ENCODE measurements at regions of chr20 and their contacts with region 1.

Region 1: GRCh38 chr20:4720041-4720976 is 1.4 kb upstream of the PRND start:
- DNase-seq: peak; percentile 87
- ATAC-seq: peak; percentile 81
- H3K4me3 Mint-ChIP-seq: no peak overlapping the region
- H3K27ac Mint-ChIP-seq: peak overlapping the region; percentile 55
- H3K4me1 Mint-ChIP-seq: peaks cover 13% of the 10 kb centered on the region
- H3K27me3 Mint-ChIP-seq: peaks cover 9% of the 10 kb centered on the region

Region 2: GRCh38 chr20:4607287-4607713 is 113.0 kb before region 1 on chr20:
- CTCF ChIA-PET with region 1: interaction called, 24 read pairs
- POLR2A ChIA-PET with region 1: interaction called, 3 read pairs
- DNase-seq: peak; percentile 70
- ATAC-seq: peak; percentile 80
- H3K4me3 Mint-ChIP-seq: no peak overlapping the region
- H3K27ac Mint-ChIP-seq: no peak overlapping the region
- H3K4me1 Mint-ChIP-seq: no peaks in the 10 kb centered on the region
- H3K27me3 Mint-ChIP-seq: peaks cover 20% of the 10 kb centered on the region

Region 3: DNA sequence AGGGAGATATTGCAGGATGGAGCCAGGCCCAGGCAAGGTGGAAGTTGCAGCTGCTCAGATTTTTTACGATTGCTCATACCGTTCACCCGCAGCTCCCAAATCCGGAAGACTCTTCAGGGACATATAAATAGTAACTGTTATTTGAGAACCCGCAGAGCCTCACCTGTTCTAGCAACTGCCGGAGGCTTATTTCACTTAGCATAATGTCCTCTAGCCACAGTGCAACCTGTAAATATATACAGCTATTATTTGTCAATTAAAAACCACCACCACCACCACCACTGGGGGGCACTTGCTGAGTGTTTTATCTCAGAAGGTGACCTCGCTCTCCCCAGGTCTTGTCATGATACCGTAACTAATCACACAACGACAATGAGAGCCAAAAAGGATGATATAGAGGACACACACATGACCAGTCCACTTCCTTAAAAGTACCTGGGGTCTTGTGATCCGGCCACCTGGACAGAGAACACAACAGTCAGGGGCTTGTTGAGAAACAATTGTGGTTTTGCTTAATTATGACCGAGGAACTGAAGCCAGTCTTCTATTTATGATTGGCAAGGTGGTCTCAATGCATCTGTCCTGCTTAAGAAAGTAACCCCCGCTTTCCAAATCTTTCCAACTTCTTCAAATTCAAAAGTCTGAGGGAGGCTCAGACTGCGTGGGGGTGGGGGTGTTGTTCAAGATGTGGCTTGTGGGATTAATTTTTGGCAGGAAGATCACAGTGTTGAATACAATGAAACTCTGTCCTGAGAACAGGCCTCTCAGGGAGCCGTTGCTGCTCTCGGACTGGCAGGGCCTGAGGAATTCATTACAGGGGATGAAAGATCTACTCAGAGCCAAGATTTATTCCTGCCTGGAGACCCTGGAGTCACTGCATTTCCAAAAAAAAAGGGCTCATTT is 106.3 kb before region 1 on chr20:
- CTCF ChIA-PET with region 1: interaction called, 27 read pairs
- POLR2A ChIA-PET with region 1: interaction called, 3 read pairs
- DNase-seq: peak; percentile 83
- ATAC-seq: peak; percentile 87
- H3K4me3 Mint-ChIP-seq: no peak overlapping the region
- H3K27ac Mint-ChIP-seq: no peak overlapping the region
- H3K4me1 Mint-ChIP-seq: peaks cover 8% of the 10 kb centered on the region
- H3K27me3 Mint-ChIP-seq: peaks cover 10% of the 10 kb centered on the region

Region 4: DNA sequence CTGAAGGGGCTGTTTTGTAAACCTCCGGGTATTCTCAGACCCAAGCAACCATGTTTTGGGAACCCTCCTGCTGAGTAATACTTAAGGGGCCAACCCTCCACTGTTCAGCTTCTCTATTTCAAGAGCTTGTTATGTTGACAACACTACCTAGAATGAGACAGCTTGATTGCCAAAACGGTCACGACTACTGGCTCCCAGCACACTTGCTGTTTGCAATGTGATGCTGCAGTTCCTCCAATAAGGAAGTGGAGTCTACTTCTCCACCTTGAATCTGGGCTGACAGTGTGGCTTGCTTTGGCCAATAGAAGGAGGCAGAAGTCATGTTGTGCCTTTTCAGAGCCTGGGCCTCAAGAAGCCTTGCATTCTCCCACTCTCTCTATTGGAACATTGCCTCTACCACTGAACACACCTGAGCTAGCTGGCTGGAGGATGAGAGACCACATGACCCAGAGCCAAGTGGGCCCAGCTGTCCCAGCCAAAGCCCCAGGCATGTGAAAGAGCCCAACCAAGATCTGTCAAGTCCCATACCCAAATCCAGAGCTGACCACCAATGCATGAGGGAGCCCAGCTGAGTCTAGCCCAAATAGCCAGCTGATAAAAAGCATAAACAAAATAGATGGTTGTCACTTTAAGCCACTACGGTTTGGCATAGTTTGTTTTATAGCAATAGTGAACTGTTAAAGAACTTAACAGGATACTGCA is 109.4 kb after region 1 on chr20:
- CTCF ChIA-PET with region 1: no interaction called
- POLR2A ChIA-PET with region 1: no interaction called
- DNase-seq: no peak
- ATAC-seq: no peak
- H3K4me3 Mint-ChIP-seq: no peak overlapping the region
- H3K27ac Mint-ChIP-seq: no peak overlapping the region
- H3K4me1 Mint-ChIP-seq: no peaks in the 10 kb centered on the region
- H3K27me3 Mint-ChIP-seq: peaks cover 2% of the 10 kb centered on the region

Measured in activated CD8-positive, alpha-beta T cell treated with anti-CD3 and anti-CD28 coated beads, Interleukin-2, amount 10 ng/mL, durations not matched to agents 7 days and 5 days (primary cell).